Left colon (tissue), 2 donors: ENCODE measurements at regions of chr1 and their contacts with region 1.

Region 1: DNA sequence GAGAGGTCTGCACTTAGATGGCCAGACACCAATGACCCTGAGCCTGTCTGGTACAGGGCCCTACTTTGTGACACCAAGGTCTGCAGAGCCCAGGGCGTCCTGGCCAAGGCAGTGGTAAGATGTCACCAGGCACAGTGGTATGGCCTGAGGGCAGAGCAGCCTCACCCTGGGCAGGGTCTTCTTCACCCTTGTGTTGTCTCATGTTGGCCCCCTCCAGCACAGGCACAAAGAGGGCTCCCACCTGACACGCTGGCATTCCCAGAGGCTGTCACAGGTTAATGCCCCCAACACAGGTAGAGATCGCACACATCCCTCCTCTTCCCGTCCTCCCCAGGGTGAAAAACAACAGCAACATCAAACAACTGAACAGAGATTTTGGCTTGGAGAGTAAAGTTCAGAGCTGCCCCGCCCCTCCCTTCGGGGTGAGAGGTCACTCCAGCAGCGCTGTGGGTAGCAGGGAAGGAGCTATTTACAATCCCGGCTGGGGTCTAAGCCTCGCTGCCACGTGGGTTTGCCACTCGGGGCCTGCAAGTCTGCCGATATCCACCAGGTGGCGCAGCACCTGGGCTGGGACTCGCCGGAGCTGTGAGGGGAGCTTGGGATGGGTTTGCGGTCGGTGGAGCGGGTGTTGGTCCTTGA is 12.6 kb downstream of the EFNA3 start:
- DNase-seq: peak; percentile 65 to 81
- ATAC-seq: peak; percentile 59

Region 2: DNA sequence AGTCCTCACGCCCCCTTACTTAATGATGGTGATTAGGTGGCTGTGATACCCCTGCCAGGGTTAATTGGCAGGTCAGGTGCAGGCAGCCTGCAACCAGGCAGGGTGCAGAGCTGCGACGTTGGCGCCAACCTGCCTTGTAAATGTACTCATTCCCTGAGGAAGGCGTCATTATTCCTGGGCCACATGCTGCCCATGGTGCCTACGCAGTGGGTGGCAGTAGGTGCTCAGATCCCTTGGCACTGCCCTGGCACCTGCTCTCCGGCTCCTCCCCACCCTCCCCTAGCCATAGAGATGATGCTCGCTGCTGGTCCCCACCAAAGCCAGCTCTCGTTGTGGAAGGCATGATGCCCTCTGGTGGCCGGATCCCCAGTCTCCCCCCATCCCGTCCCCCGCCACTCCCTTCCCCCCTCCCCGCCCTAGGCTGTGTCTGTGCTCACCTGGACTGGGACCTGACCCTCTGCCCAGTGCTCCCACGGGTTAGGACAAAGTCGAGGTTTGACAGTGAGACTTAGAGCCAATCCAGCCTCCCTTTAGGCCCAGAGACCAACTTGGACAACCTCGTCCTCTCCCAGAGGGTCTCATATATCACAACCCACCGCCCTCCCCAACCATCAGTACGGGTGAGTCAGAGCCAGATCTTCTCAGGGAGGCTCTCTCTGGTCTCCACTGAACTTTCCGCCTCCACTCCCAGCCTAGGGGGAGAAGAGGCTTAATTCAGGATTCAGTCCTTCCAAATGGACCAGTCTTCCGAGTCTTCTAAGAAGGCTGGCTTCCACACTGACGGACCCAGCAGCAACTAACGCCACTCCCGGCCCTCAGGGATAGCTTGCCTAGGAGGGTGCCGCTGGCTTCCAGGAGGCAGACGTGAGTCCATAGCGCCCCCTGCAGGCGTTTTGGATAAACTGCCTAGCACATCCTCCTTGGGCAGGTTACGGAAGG is 76.2 kb after region 1 on chr1:
- intact Hi-C with region 1: loop called (anchors 2 to 5 kb)
- DNase-seq: peak; percentile 84 to 92
- ATAC-seq: peak; percentile 86

Region 3: GRCh38 chr1:155172732-155173477 is 81.7 kb after region 1 on chr1 and contains the start of gene KRTCAP2:
- intact Hi-C with region 1: loop called (anchors 2 to 5 kb)
- DNase-seq: peak; percentile 94 to 96
- ATAC-seq: peak; percentile 76
- total RNA-seq, gene KRTCAP2: 143 to 164 TPM

Region 4: DNA sequence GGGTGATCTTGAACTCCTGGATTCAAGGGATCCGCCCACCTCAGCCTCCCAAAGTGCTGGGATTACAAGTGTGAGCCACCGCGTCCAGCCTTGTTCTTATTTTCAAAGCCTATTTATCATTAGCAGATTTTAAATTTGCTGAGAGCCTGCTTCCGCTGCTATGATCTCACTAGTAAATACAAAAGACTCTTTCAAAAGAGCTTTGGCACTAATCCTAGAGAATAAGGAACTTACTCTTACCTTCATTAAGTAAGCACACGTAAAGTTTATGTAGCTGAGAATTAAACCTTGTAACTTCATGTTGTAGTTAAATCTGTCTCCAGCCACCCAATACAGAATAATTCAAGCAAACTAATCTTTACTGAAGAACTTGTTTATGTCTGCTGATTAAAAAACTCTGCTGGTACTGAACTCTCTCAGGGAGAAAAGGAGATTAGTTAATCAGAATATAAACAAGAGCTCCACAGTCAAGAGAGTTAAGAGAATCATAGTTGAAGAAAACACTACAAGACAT is 301.8 kb after region 1 on chr1:
- intact Hi-C with region 1: no loop called
- DNase-seq: no peak
- ATAC-seq: peak; percentile 56